Activated CD4-positive, alpha-beta T cell treated with anti-CD3 and anti-CD28 coated beads, Interleukin-2, amount 10 ng/mL, durations not matched to agents 24 days and 14 days (primary cell): ENCODE measurements at regions of chr2 and their contacts with region 1.

Region 1: DNA sequence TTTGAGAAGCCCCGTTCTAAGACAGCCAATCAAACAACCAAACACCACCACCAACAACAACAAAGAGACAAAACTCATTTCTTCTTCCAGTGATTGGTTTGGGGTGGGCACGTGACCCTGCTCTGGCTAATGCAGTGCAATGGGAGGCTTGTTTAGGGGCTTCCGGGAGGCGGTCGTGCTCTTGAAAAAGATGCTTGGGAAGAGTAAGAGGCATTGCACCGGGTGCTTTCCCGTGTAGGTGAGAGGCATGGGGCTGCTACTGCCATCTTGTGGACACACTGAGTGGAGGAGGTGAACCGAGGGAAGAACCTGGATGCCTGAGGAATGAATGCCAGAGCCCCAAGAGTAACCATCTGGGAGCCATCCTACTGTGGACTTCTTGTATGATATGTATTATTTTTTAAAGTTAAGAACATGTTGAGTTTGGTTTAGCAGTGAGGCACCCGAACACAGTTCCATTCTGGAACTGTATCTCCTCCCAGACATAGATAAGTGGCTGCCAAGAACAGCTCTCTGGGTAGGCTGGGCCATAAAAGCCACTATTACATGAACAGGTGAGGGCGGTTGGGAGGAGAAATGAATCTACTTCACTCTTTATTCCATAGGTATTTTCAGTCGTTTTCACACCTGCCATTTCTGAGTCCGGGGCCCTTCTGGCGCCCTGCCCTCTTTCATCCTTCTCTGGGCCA is 19.1 kb upstream of the ARHGAP25 start:
- DNase-seq: peak; percentile 75
- H3K4me3 Mint-ChIP-seq: peak overlapping the region; percentile 1
- H3K27ac Mint-ChIP-seq: peak overlapping the region; percentile 75
- H3K4me1 Mint-ChIP-seq: peaks cover 80% of the 10 kb centered on the region
- H3K27me3 Mint-ChIP-seq: no peaks in the 10 kb centered on the region

Region 2: DNA sequence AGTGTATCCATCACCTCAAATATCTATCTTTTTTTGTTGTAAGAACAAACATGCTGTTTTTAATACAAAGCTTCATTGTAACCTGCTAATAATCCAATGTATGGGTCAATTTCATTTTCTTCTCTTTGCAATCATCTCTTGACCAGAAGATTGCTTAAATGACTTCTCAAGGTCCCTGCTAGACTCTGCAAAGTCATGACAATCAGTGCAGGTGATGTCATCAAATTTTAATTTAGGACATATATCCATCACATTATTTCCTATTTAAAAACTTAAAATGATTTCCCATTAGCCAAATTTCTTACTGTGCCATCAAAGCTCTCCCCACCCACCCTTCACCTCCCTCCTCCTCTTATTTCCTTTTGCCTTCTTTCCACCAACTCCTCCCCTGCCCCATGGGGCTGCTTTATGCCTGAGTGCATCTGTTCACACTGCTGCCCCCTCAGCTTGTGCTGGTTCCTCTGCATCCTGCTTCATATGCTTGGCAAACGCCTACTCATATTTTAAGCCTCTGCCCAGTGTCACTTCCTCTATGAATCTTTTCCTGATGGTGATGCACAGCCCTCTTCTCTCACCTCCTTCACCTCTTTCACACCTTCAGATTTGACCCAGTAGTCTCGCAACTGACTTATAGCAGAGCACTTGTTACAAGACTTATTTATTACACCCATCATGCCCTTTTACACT is 330.1 kb before region 1 on chr2:
- intact Hi-C with region 1: loop called (anchors 5 kb)
- DNase-seq: peak; percentile 63
- H3K4me3 Mint-ChIP-seq: peak overlapping the region; percentile 10
- H3K27ac Mint-ChIP-seq: peak overlapping the region; percentile 45
- H3K4me1 Mint-ChIP-seq: peaks cover 38% of the 10 kb centered on the region
- H3K27me3 Mint-ChIP-seq: peaks cover 12% of the 10 kb centered on the region

Region 3: GRCh38 chr2:68689553-68690537 is 25.7 kb before region 1 on chr2:
- intact Hi-C with region 1: loop called (anchors 1 kb)
- DNase-seq: peak; percentile 63
- H3K4me3 Mint-ChIP-seq: peak overlapping the region; percentile 11
- H3K27ac Mint-ChIP-seq: peak overlapping the region; percentile 49
- H3K4me1 Mint-ChIP-seq: peaks cover 20% of the 10 kb centered on the region
- H3K27me3 Mint-ChIP-seq: peaks cover 8% of the 10 kb centered on the region

Region 4: DNA sequence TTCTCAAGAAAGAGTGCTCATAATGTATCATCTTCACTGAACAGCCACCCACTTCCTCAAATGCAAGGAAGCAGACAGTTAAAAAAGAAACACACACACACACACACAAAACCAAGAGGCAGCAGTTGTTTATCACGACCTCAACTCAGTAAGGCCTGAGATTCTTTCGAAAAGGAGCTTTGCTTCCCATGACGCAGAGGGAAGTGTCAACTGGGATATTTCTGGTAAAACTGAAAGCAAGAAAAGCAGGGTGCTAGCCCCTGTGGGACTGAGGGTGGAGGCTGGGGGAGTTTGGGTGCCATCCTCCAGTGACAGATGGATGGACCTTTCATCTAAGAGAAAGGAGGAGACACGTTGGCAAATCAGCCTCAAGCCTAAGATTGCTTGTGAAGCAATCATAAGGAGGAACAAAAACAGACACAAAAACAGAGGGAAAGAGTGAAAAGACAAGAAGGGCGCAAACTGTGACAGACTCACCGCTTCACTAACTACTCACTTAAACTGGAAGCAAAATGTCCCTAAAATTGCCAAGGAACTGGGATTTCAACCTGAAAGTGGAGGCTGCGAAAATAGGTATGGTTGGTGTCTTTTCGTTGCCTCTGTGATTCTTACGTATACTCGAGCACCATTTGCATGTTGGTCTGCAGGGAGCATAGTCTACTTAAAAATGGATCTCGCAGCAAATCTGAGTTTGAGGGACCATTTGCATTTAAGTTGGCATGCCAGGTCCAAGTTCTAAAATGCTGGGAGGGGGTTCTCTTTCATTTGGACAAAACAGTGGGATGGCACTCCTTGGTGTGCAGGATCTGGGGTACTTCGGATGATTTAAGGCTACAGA is 19.4 kb after region 1 on chr2 and contains the start of gene ARHGAP25:
- intact Hi-C with region 1: loop called (anchors 1 kb)
- DNase-seq: peak; percentile 89
- H3K4me3 Mint-ChIP-seq: no peak within 1 kb of the TSS
- H3K27ac Mint-ChIP-seq: no peak within 1 kb of the TSS
- H3K4me1 Mint-ChIP-seq: peaks cover 41% of the 10 kb centered on the region
- H3K27me3 Mint-ChIP-seq: no peaks in the 10 kb centered on the region
- total RNA-seq, gene ARHGAP25: 37.8 and 42.2 TPM in 2 replicates

Region 5: GRCh38 chr2:68909793-68910674 is 194.5 kb after region 1 on chr2:
- intact Hi-C with region 1: loop called (anchors 2 kb)
- DNase-seq: peak; percentile 91
- H3K4me3 Mint-ChIP-seq: peak overlapping the region; percentile 13
- H3K27ac Mint-ChIP-seq: peak overlapping the region; percentile 67
- H3K4me1 Mint-ChIP-seq: peaks cover 35% of the 10 kb centered on the region
- H3K27me3 Mint-ChIP-seq: no peaks in the 10 kb centered on the region